A549 (cell line): ENCODE measurements at regions of chr19 and their contacts with region 1.

Region 1: GRCh38 chr19:35509861-35510625 is 3.4 kb downstream of the DMKN start:
- DNase-seq: peak; percentile 73 to 99
- ATAC-seq: peak; percentile 68 to 90
- H3K4me3 ChIP-seq: peak overlapping the region; percentile 48
- H3K27ac ChIP-seq: peak overlapping the region; percentile 57 to 80
- H3K4me1 ChIP-seq: peaks cover 16% of the 10 kb centered on the region
- CTCF ChIP-seq: peak; percentile 100
- EP300 ChIP-seq: no peak
- POLR2A ChIP-seq: no peak; the same call in 1 of the 2 replicates
- RAD21 ChIP-seq: peak; percentile 70 to 81

Region 2: DNA sequence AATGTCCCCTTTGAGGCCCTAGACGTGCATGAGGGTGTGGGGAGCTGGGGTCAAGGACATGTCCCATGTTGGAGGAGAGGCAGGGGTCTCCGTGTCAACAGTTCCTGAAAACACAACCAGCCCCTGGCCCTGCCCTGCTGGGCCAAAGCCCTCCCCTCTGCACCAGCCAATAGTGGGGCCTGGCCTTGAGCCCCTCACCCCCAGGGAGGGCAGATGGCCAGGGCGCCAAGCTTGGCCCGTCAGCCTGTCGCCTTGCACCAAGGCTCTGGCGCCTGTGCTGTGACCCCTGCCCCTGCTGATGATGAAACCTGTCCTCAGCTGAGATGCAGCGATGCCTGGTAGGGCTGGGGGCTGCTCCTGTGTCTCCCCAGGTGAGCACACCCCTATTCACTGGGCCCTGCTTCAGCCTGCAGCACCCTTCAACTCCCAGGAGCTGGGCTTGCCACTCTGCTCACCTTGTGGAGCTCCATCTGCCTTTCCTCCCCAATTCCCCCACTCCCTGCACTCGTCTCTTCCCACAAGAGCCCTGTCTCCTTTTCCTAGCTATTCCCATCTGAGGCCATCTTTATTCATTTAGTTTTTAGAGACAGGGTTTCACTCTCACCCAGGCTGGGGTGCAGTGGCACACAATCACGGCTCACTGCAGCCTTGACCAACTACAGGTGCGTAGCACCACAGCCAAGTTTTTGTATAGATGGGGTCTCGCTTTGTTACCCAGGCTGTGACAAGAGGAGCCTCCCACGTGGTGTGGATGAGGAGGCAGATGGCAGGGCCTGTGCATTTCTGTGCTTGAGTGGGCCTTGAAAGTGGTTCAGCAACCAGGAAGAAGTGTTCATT is 229.8 kb before region 1 on chr19:
- CTCF ChIA-PET with region 1: no interaction called
- POLR2A ChIA-PET with region 1: no interaction called
- DNase-seq: no peak
- ATAC-seq: peak in 1 of 2 experiments; percentile 4; a peak in 2 of 6 replicates
- H3K4me3 ChIP-seq: no peak overlapping the region
- H3K27ac ChIP-seq: no peak overlapping the region
- H3K4me1 ChIP-seq: no peaks in the 10 kb centered on the region
- CTCF ChIP-seq: no peak
- EP300 ChIP-seq: no peak
- POLR2A ChIP-seq: 0 out of 2 replicates have a peak, but pooled peaks have one; percentile 1
- RAD21 ChIP-seq: no peak

Region 3: DNA sequence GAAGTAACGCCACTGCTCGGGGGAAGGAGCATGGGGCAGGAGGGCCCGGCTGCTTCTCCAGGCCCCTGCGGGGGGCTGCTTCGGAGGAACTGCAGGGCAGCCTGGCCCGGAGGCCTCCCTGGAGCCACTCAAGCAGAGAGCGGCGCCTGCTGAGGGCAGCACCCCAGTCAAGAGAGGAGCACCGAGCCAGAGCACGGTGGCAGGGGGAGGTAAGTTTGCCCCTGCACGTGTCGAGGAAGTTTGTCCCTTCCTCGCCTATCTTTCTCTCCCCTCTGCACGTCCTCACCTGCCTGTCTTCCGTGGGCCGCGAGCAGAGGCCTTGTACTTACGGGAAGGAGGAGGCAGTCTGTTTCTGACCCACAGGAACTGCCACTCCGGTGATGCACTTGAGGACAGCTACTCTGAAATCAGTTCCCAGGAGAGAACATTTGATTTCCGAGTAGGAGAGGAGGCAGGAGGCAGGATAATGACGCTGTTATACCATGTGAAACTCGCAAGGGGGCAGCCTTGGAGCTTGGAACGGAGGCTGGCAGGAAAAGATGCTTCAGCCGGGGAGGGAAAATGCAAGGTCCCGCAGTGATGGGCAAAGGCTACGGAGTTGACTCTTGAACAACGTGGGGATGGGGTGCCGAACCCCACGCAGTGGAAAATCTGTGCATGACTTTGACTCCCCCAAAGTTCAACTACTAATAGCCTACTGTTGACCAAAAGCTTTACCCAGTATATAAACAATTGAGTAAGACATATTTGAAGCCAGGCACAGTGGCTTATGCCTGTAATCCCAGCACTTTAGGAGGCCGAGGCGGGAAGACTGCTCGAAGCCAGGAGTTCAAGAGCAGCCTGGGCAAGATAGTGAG is 157.4 kb before region 1 on chr19:
- CTCF ChIA-PET with region 1: interaction called, 23 read pairs
- POLR2A ChIA-PET with region 1: interaction called, 3 read pairs
- DNase-seq: peak; percentile 87 to 98
- ATAC-seq: peak; percentile 77 to 88
- H3K4me3 ChIP-seq: no peak overlapping the region
- H3K27ac ChIP-seq: no peak overlapping the region
- H3K4me1 ChIP-seq: no peaks in the 10 kb centered on the region
- CTCF ChIP-seq: peak; percentile 98
- EP300 ChIP-seq: no peak
- POLR2A ChIP-seq: no peak
- RAD21 ChIP-seq: peak; percentile 98 to 99

Region 4: DNA sequence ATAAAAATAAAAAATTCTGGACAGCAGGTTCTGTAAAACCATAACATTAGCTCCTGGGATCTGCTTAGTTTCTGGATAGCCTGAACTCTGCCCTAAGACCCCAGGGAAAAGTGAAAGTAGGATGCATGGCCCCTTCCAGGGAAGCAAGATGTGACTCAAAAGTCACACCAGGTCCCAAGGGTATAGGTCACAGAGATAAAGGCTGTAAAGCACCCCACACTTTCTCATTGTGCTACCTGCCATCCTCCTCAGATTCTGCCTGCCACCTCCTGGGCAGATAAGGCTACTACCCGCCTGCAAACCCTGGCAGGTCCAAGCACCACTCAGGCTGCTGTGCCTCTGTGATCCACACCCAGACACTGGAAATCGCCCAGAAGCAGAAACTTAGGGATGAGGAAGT is 41.4 kb before region 1 on chr19:
- CTCF ChIA-PET with region 1: interaction called, 15 read pairs
- POLR2A ChIA-PET with region 1: no interaction called
- DNase-seq: peak; percentile 72 to 82
- ATAC-seq: peak; percentile 99
- H3K4me3 ChIP-seq: no peak overlapping the region
- H3K27ac ChIP-seq: no peak overlapping the region
- H3K4me1 ChIP-seq: no peaks in the 10 kb centered on the region
- CTCF ChIP-seq: peak; percentile 74
- EP300 ChIP-seq: no peak
- POLR2A ChIP-seq: no peak
- RAD21 ChIP-seq: peak; percentile 80 to 85

Region 5: DNA sequence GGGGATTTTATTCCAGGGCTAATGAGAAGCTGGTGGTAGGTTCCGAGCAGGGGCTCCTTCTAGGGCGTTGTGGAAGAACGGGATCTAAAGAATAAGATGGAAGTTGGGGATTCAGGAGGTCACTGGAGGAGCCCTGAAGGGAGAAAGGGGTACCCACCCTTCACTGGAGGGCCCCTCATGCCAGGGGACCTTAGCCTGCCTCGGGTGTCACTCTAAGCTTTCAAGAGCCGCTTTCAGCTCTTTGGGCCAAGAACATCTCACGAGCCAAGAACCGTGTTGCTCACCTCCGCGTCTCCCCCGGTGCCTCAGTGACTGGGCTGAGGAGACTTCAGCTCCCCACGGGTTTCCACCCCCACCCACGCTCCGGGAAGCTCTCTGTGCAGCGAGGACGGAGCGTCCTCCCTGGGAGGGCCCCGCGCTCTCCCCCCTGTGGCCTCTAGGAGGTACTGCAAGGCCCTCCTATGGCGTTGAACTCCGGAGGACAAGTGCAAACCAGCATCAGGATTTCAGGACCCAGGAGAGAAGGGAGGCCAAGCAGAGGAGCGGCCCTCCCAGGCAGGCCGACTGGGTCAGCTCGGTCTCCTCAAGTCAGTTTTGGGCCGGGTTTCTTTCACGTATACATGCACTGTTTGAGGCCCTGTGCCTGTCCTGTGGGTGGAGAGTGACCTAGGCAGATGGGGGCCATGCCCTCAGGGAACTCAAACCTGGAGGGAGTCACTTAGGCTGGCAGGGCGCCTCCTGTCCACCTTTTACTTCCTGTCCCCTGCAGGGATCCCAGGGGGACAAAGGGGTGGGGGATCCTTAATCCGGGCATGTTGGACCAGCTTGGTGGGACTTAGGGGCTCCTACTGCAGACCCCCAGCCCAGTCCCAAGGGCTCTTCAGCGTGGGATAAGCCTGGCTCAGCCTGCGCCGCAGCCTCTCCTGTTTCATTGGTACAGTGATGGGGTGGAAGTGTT is 14.7 kb before region 1 on chr19:
- CTCF ChIA-PET with region 1: interaction called, 207 read pairs
- POLR2A ChIA-PET with region 1: interaction called, 11 read pairs
- DNase-seq: peak; percentile 81 to 97
- ATAC-seq: peak; percentile 90 to 95
- H3K4me3 ChIP-seq: peak overlapping the region; percentile 24; the same call in 2 of the 3 replicates
- H3K27ac ChIP-seq: peak overlapping the region; percentile 35 to 64; a peak in 3 of 6 replicates
- H3K4me1 ChIP-seq: no peaks in the 10 kb centered on the region; the same call in 2 of the 3 replicates
- CTCF ChIP-seq: peak; percentile 96
- EP300 ChIP-seq: no peak
- POLR2A ChIP-seq: no peak
- RAD21 ChIP-seq: peak; percentile 83 to 85

Region 6: GRCh38 chr19:35557539-35558399 is 47.7 kb after region 1 on chr19:
- CTCF ChIA-PET with region 1: interaction called, 22 read pairs
- POLR2A ChIA-PET with region 1: interaction called, 5 read pairs
- DNase-seq: peak; percentile 83 to 89
- ATAC-seq: peak; percentile 42 to 81
- H3K4me3 ChIP-seq: peak overlapping the region; percentile 51
- H3K27ac ChIP-seq: peak overlapping the region in 1 of 2 experiments; percentile 62; a peak in 3 of 6 replicates
- H3K4me1 ChIP-seq: 0 out of 3 replicates have a peak, but pooled peaks cover 6% of the 10 kb centered on the region
- CTCF ChIP-seq: no peak
- EP300 ChIP-seq: no peak
- POLR2A ChIP-seq: no peak
- RAD21 ChIP-seq: no peak

Region 7: DNA sequence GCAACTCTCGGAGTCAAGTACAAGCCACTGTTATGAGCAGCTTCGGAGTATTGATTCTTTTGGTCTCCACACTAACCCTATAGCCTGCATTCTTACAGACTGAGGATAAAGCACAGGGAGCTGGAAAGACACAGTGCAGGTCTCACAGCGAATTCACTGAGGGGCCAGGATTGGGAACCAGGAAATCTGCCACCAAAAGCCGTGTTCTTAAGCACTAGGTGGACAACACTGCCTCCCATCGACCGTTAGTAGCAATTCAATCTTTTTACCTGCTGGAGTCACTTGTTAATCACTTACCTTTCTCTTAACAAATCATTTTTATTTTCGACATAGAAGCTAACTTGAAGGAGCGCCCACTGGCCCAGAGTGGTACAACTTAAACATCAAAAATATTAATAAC is 82.2 kb after region 1 on chr19:
- CTCF ChIA-PET with region 1: interaction called, 12 read pairs
- POLR2A ChIA-PET with region 1: no interaction called
- DNase-seq: peak; percentile 62 to 82
- ATAC-seq: no peak; a peak in 1 of 6 replicates
- H3K4me3 ChIP-seq: no peak overlapping the region
- H3K27ac ChIP-seq: no peak overlapping the region
- H3K4me1 ChIP-seq: no peaks in the 10 kb centered on the region
- CTCF ChIP-seq: peak; percentile 50
- EP300 ChIP-seq: no peak
- POLR2A ChIP-seq: no peak
- RAD21 ChIP-seq: peak; percentile 51 to 61

Region 8: DNA sequence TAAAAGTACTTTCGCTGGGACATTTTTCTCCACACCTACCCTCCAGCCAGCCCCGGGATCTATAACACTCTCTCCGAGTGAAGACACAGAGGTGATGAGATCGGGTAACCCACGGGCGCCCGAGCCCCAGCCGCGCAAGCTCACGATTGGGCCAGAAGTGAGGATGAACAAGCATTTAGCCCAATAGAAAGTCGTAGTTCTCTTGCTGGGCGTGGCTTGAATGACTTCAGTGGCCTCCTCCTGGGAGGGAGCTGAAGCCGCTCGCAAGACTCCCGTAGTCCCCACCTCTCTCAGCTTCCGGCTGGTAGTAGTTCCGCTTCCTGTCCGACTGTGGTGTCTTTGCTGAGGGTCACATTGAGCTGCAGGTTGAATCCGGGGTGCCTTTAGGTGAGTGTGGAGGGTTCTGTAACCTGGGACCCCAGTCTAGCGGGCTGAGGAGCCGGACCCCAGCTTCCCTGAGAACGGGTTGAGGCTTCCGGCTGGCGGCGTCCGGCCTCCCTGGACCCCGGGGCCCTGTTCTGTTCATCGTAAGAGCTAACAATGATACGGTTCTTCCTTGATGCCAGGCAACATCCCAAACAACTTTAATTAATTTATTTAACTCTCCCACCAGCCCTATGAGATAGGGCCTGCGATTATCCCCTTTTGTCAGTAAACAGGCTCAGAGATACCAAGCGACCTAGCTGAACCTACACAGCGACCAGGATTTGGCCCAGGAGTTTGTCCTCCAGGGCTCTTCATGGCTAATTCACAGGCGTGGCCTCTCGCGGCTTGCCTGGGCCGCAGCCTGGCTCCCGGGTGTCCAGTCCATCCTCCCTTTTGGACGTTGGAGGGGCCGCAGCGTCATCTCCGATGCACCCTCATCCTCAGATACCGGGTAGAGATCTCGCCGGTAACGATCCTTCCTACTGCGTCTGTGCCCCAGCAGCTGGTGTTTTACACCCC is 138.2 kb after region 1 on chr19 and contains the start of gene COX6B1:
- CTCF ChIA-PET with region 1: interaction called, 10 read pairs
- POLR2A ChIA-PET with region 1: no interaction called
- DNase-seq: peak; percentile 99 to 100
- ATAC-seq: peak; percentile 62 to 76
- H3K4me3 ChIP-seq: peak within 1 kb of the TSS; percentile 67
- H3K27ac ChIP-seq: peak within 1 kb of the TSS; percentile 81 to 84
- H3K4me1 ChIP-seq: peaks cover 18% of the 10 kb centered on the region
- CTCF ChIP-seq: no peak
- EP300 ChIP-seq: no peak
- POLR2A ChIP-seq: peak; percentile 96
- RAD21 ChIP-seq: no peak
- polyA plus RNA-seq, gene COX6B1: 749 and 1,115 TPM in 2 replicates